ENCODE measurements at regions of chr14 and their contacts with region 1.

Region 1: GRCh38 chr14:71444030-71444822 is 488.0 kb upstream of the RGS6 start:
- DNase-seq: peak; percentile 40
- ATAC-seq: peak; percentile 69
- H3K4me3 ChIP-seq: no peak overlapping the region
- H3K27ac ChIP-seq: no peak overlapping the region
- H3K4me1 ChIP-seq: peaks cover under 1% of the 10 kb centered on the region; the same call in 1 of the 2 replicates
- H3K27me3 ChIP-seq: no peaks in the 10 kb centered on the region
- CTCF ChIP-seq: no peak
- EP300 ChIP-seq: peak; percentile 38 to 47; a peak in 2 of 4 replicates
- POLR2A ChIP-seq: no peak
- RAD21 ChIP-seq: no peak

Region 2: DNA sequence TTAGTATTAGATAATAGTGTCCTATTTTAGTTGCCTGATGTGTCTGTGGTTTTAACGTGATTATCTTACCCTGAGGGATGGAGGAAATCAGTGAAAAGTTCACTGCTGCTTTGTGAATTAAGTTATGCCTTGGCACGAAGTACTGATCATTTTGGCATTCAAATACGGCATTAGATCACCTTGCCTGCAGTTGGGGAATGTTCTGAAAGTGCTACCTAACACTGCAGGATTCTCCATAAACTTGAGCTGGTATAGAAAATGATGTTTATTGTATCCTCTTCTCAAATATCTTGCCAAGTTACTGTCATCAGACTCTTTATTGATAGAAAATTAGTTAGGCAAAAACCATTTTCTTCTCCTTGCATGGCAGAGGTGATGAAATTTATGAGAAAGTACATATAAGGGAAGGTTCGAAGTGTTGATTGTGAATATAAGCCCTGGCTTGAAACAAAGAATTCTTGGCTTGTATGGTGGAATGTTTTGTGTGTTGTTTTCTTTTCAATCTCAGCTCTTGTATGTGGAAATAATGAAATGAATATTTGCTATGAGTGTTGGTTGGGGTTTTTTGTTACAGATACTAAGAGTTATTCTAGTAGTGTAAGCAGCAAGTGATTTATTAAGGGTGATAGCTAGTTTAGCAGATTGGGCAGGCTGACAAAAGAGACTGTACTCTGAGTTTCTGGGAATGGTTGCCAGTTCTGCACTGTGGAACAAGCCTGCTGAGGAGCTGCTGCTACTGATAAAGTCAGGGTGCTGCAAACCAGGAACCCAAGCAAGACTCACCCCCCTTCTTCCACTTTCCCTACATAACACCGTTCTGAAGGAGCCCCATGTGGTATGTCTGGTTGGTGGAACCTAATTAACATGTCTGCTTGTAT is 88.7 kb before region 1 on chr14:
- CTCF ChIA-PET with region 1: no interaction called
- POLR2A ChIA-PET with region 1: no interaction called
- RAD21 ChIA-PET with region 1: interaction called, 10 read pairs
- SMC1A ChIA-PET with region 1: interaction called, 5 read pairs
- in situ Hi-C with region 1: no loop called
- intact Hi-C with region 1: no loop called
- DNase-seq: no peak
- ATAC-seq: peak; percentile 45
- H3K4me3 ChIP-seq: peak overlapping the region; percentile 20; the same call in 1 of the 2 replicates
- H3K27ac ChIP-seq: peak overlapping the region; percentile 52
- H3K4me1 ChIP-seq: peaks cover 38% of the 10 kb centered on the region
- H3K27me3 ChIP-seq: no peaks in the 10 kb centered on the region
- CTCF ChIP-seq: no peak
- EP300 ChIP-seq: no peak
- POLR2A ChIP-seq: no peak
- RAD21 ChIP-seq: no peak